Ascending aorta (tissue), 2 donors: ENCODE measurements at regions of chr22 and their contacts with region 1.

Region 1: DNA sequence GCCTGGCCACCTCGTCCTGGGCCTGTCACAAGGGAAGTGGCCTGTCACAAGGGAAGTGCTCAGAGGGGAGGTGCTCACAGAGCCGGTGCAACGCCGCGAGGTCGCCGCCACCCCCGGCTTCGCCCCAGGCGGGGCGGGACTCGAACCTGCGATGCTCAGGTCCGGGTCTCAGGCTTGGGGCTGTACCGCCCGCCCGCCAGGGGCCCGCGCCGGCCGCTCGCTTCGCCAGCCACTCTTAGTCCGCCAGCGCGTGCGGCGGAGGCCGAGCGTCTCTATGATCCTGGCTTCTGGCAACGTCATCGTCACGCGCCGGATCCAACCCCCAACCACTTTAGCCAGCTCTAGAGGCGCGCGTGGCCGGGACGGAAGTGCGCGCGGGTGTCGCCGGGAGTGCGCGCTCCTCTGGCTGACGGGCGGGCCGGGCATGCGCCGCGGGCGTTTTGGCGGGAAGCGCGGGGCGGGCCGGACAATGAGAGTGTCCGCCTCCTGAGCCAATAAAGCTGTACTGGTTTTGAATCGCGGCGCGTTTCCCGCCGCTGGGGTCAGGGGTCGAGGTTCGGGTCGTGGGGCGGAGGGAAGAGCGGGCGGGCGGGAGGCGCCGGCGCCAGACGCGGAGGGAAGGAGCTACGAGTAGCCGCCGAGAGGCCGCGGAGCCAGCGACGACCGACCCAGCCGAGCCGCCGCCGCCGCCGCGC is at the start of gene TRMT2A:
- DNase-seq: peak; percentile 92 to 99
- H3K4me3 ChIP-seq: peak within 1 kb of the TSS; percentile 68 to 85
- H3K27ac ChIP-seq: peak within 1 kb of the TSS; percentile 83 to 85
- H3K4me1 ChIP-seq: peaks cover 6 to 18% of the 10 kb centered on the region in 2 donors
- H3K27me3 ChIP-seq: no peaks in the 10 kb centered on the region
- CTCF ChIP-seq: peak in 2 of 3 experiments; percentile 17 to 26
- total RNA-seq, gene TRMT2A: 161 TPM

Region 2: DNA sequence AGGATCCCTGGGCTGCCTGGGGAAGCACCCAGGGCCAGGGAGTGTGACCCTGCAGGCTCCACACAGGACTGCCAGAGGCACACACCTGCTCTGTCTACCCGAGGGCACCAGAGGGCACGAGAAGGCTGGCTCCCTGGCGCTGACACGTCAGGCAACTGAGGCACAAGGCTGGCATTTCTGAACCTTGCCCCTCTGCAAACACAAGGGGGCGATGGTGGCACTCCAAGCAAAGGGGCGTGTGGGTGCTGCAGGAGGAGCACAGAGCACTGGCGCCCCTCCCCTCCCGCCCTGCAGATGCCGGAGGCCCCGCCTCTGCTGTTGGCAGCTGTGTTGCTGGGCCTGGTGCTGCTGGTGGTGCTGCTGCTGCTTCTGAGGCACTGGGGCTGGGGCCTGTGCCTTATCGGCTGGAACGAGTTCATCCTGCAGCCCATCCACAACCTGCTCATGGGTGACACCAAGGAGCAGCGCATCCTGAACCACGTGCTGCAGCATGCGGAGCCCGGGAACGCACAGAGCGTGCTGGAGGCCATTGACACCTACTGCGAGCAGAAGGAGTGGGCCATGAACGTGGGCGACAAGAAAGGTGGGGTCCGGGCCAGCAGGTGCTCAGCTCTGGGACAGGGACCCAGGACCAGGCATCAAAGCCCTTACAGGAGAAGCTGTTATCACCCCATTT is 154.7 kb before region 1 on chr22:
- intact Hi-C with region 1: loop called (anchors 10 kb)
- DNase-seq: peak in 1 of 2 donors; percentile 83
- H3K4me3 ChIP-seq: no peak overlapping the region
- H3K27ac ChIP-seq: no peak overlapping the region
- H3K4me1 ChIP-seq: peaks cover 2 to 14% of the 10 kb centered on the region in 2 donors
- H3K27me3 ChIP-seq: no peaks in the 10 kb centered on the region
- CTCF ChIP-seq: peak in 2 of 3 experiments; percentile 54 to 61

Region 3: GRCh38 chr22:20079745-20080444 is 37.2 kb before region 1 on chr22 and contains the start of gene DGCR8:
- intact Hi-C with region 1: loop called (anchors 1 kb)
- DNase-seq: peak; percentile 50 to 95
- H3K4me3 ChIP-seq: peak within 1 kb of the TSS; percentile 80 to 83
- H3K27ac ChIP-seq: peak within 1 kb of the TSS; percentile 82 to 89
- H3K4me1 ChIP-seq: peaks cover 12 to 28% of the 10 kb centered on the region in 2 donors
- H3K27me3 ChIP-seq: no peaks in the 10 kb centered on the region
- CTCF ChIP-seq: no peak
- total RNA-seq, gene DGCR8: 18.0 TPM

Region 4: GRCh38 chr22:20093418-20094196 is 23.5 kb before region 1 on chr22:
- intact Hi-C with region 1: no loop called
- DNase-seq: peak; percentile 50 to 80
- H3K4me3 ChIP-seq: no peak overlapping the region
- H3K27ac ChIP-seq: peak overlapping the region in 1 of 2 donors; percentile 51
- H3K4me1 ChIP-seq: peaks cover 0 to 3% of the 10 kb centered on the region in 2 donors
- H3K27me3 ChIP-seq: no peaks in the 10 kb centered on the region
- CTCF ChIP-seq: no peak

Region 5: DNA sequence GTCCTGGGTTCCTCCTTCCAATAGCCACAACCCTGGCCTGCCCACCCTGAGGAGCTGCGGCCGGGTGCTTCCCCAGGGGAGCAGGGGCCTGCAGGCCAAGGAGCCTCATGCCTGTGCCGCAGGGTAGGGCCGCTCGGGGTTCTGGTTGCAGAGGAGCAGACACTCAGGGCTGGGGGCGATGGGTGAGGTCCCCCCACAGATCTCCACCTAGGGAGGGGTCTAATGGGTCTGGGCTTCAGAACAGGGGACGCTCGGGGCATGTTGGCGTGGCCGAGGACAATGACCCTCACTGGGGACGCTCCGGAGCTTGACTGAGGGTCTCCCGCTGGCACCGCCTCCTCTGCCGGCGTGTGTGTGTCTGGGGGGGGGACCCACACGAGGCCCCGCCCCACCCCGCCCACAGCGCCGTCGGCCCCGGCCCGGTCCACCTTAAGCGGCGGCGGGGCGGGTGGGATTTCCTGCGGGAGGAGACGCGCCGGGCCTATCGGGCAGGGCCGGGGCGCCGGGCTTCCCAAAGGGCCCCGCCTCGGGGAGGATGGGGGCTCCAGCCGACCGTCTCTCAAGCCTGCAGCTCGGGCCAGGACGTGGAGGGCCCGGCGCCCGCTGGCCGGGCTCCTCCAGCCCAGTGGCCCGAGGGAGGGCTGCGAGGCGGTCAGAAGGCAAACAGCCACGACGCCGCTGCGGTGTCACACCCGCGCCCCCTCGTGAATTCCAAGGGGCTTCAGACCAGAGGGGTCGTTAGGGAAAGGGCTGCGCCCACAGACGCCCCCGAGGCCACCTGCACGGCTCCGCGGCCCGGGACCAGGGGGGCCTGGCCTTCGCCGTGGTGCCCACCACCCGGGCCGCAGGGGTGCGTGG is 13.9 kb after region 1 on chr22:
- intact Hi-C with region 1: loop called (anchors 1 kb)
- DNase-seq: peak; percentile 21 to 93
- H3K4me3 ChIP-seq: peak overlapping the region; percentile 82 to 100
- H3K27ac ChIP-seq: peak overlapping the region; percentile 90 to 98
- H3K4me1 ChIP-seq: peaks cover 23 to 37% of the 10 kb centered on the region in 2 donors
- H3K27me3 ChIP-seq: no peaks in the 10 kb centered on the region
- CTCF ChIP-seq: no peak